Breast epithelium (tissue), 4 donors: ENCODE measurements at regions of chr2 and their contacts with region 1.

Region 1: DNA sequence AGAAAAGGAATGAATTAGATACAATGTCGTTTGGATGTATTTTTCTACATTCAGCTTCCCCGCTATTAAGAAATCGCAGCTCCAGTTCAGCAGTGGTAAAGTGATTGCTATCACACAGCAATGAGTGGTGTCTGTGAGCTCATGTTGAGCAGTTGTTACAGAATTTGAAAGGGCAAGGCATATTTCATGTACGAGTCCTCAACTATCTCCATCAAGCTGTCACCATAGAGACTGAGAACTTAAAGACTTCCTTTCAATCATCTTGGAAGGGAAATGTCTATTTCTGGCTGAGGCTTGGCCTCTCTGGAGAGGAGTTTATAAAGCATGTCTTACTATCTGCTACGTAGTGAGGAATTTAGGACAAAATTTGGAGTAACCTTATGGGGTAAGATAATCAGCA is 24.4 kb upstream of the FAM117B start:
- DNase-seq: no peak
- H3K4me3 ChIP-seq: no peak overlapping the region
- H3K27ac ChIP-seq: no peak overlapping the region
- H3K4me1 ChIP-seq: no peaks in the 10 kb centered on the region
- H3K27me3 ChIP-seq: no peaks in the 10 kb centered on the region
- CTCF ChIP-seq: no peak
- POLR2A ChIP-seq: no peak

Region 2: DNA sequence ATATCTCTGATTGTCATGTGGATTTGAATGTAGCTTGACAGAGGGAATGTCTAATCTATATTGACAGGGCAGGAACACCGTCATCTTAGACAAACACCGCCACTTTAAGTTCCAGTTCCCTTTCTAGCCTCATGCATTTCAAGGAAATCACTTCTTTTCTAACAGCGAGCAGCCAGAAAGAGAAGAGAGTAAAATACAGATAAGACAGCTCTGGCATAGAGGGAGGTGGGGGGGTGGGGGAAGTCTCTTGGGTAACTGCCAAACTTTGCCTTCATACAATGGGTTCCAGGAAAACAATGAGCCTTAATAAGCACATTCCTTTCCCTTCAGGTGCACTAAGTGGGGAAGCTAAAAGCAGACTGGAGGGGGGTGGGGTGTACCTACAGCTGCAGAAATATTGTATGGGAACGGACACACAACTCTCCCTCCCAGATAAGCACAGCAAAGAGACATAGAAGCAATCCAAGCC is 1390.2 kb before region 1 on chr2:
- intact Hi-C with region 1: no loop called
- DNase-seq: no peak
- H3K4me3 ChIP-seq: no peak overlapping the region
- H3K27ac ChIP-seq: peak overlapping the region; percentile 17 to 33
- H3K4me1 ChIP-seq: no peaks in the 10 kb centered on the region
- H3K27me3 ChIP-seq: no peaks in the 10 kb centered on the region
- CTCF ChIP-seq: no peak
- POLR2A ChIP-seq: no peak

Region 3: DNA sequence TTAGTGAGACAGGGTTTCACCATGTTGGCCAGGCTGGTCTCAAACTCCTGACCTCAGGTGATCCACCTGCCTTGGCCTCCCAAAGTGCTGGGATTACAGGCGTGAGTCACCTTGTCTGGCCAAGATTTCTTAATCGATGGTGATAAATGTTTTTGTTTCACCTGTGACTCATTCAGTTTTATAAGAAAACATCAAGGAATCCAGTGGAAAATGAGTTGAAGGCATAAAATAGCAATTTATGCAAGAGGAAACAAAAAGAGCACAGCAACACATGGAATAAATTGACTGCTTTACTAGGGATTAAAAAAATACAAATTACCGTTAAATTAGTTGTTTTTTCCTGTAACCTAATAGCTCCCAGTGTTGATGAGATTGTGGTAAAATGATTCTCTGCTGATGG is 723.9 kb before region 1 on chr2:
- intact Hi-C with region 1: loop called (anchors 5 kb)
- DNase-seq: no peak
- H3K4me3 ChIP-seq: no peak overlapping the region
- H3K27ac ChIP-seq: no peak overlapping the region
- H3K4me1 ChIP-seq: peaks cover 0 to 9% of the 10 kb centered on the region in 2 donors
- H3K27me3 ChIP-seq: no peaks in the 10 kb centered on the region
- CTCF ChIP-seq: no peak
- POLR2A ChIP-seq: no peak

Region 4: GRCh38 chr2:202653890-202654289 is 43.5 kb after region 1 on chr2:
- intact Hi-C with region 1: no loop called
- DNase-seq: no peak
- H3K4me3 ChIP-seq: no peak overlapping the region
- H3K27ac ChIP-seq: no peak overlapping the region
- H3K4me1 ChIP-seq: no peaks in the 10 kb centered on the region
- H3K27me3 ChIP-seq: no peaks in the 10 kb centered on the region
- CTCF ChIP-seq: no peak
- POLR2A ChIP-seq: no peak

Region 5: DNA sequence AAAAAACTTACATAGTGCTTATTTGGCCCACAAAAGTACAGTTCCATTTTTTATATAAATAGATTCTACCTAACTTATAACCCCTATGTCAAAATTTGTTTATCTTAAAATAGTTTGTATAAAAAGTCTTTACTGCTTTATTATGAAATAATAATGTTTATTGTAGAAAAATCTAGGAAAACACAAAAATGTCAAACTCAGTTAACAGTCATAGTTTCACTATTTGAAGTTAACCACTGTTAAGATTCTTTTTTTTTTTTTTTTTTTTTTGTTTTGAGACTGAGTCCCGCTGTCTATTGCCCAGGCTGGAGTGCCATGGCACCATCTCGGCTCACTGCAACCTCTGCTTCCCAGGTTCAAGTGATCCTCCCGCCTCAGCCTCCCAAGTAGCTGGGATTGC is 691.3 kb after region 1 on chr2:
- intact Hi-C with region 1: no loop called
- DNase-seq: no peak
- H3K4me3 ChIP-seq: no peak overlapping the region
- H3K27ac ChIP-seq: no peak overlapping the region
- H3K4me1 ChIP-seq: no peaks in the 10 kb centered on the region
- H3K27me3 ChIP-seq: no peaks in the 10 kb centered on the region
- CTCF ChIP-seq: no peak
- POLR2A ChIP-seq: no peak